Calu3 (cell line): ENCODE measurements at regions of chr9 and their contacts with region 1.

Region 1: DNA sequence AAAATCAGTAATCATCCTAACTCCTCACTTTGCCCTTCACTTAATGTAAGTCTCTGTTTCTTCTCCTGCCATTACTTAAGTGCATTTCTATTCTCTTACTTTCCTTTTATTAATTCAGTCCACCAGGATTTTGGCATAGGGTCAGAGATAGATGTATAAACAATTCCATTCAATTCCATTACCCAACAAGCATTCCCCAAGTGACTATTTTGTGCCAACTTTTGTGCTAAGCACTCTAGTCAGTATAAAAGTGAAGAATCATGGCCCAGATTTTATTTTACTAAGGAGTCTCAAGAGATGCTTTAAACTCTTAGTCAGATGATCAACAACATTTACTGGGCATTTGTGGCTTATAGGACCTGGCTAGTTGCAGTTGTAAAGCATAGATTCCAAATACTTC is 159.3 kb downstream of the DMAC1 start:
- DNase-seq: no peak
- H3K4me3 Mint-ChIP-seq: no peak overlapping the region
- H3K27ac Mint-ChIP-seq: no peak overlapping the region
- H3K4me1 Mint-ChIP-seq: no peaks in the 10 kb centered on the region
- H3K27me3 Mint-ChIP-seq: no peaks in the 10 kb centered on the region
- CTCF ChIP-seq: no peak

Region 2: GRCh38 chr9:7622481-7622880 is 17.8 kb before region 1 on chr9:
- CTCF ChIA-PET with region 1: no interaction called
- intact Hi-C with region 1: no loop called
- DNase-seq: no peak
- H3K4me3 Mint-ChIP-seq: no peak overlapping the region
- H3K27ac Mint-ChIP-seq: no peak overlapping the region
- H3K4me1 Mint-ChIP-seq: no peaks in the 10 kb centered on the region
- H3K27me3 Mint-ChIP-seq: peaks cover 11% of the 10 kb centered on the region
- CTCF ChIP-seq: no peak

Region 3: DNA sequence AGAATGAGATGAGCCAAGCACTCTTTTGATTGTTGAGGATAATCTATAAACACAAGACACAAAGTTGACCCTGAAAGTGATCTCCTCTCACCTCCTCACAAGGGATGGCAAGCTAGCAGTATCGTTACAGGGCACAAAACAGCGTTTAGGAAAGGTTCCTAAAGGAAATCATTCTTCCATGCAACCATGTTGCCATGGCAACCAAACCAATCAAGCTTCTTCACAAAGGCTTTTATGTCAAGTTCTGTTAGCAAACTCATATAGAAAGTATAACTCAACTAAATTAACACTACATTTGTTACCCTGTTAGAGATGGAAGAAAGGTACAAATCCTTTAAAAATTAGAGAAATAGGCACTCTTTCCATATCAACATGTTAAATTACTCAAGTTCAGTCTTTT is 1176.1 kb after region 1 on chr9:
- CTCF ChIA-PET with region 1: interaction called, 10 read pairs
- intact Hi-C with region 1: no loop called
- DNase-seq: no peak
- H3K4me3 Mint-ChIP-seq: no peak overlapping the region
- H3K27ac Mint-ChIP-seq: no peak overlapping the region
- H3K4me1 Mint-ChIP-seq: no peaks in the 10 kb centered on the region
- H3K27me3 Mint-ChIP-seq: no peaks in the 10 kb centered on the region
- CTCF ChIP-seq: no peak